ENCODE measurements at regions of chr6 and their contacts with region 1.

Region 1: GRCh38 chr6:42009966-42010891 is 40.1 kb upstream of the TAF8 start:
- DNase-seq: peak in 1 of 5 donors; percentile 33
- ATAC-seq: peak in 3 of 4 donors; percentile 60 to 85 (median 64)
- H3K4me3 ChIP-seq: peak overlapping the region in 1 of 12 donors; percentile 21
- H3K27ac ChIP-seq: peak overlapping the region in 3 of 12 donors; percentile 36 to 73 (median 60)
- H3K4me1 ChIP-seq: peaks cover 0 to 38% (median 15%) of the 10 kb centered on the region in 12 donors
- H3K27me3 ChIP-seq: no peaks in the 10 kb centered on the region
- CTCF ChIP-seq: no peak
- POLR2A ChIP-seq: no peak

Region 2: GRCh38 chr6:41966961-41967311 is 43.3 kb before region 1 on chr6:
- intact Hi-C with region 1: loop called in 1 of 10 experiments (anchors 10 kb)
- DNase-seq: no peak
- ATAC-seq: no peak
- H3K4me3 ChIP-seq: no peak overlapping the region
- H3K27ac ChIP-seq: peak overlapping the region in 1 of 12 donors; percentile 16
- H3K4me1 ChIP-seq: peaks cover 0 to 31% (median 8%) of the 10 kb centered on the region in 12 donors
- H3K27me3 ChIP-seq: no peaks in the 10 kb centered on the region
- CTCF ChIP-seq: no peak
- POLR2A ChIP-seq: no peak

Measured in heart left ventricle (tissue), 16 donors.